ENCODE measurements at regions of chr22 and their contacts with region 1.

Region 1: DNA sequence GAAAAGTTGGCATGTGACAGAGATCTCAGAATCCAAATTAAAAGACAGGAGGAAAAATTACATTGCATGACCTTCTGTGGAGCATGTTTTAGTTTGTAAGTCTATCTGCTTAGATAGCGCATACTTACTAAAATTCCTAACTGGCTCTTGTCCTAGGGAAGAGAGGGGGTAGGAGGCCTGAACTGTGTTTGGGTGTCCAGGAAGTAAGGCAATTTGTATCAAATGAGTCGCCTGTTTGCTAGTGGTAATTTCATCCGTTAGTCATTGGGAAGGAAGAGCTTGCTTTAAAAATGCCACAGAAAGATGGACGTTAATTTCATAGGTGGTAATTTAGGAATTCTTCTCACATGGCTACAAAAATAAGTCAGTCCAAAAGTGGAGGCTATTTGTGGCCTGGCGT is 18.5 kb downstream of the GRK3 start:
- DNase-seq: no peak
- H3K4me3 ChIP-seq: no peak overlapping the region
- H3K27ac ChIP-seq: no peak overlapping the region
- H3K4me1 ChIP-seq: no peaks in the 10 kb centered on the region
- H3K27me3 ChIP-seq: no peaks in the 10 kb centered on the region
- CTCF ChIP-seq: no peak

Region 2: DNA sequence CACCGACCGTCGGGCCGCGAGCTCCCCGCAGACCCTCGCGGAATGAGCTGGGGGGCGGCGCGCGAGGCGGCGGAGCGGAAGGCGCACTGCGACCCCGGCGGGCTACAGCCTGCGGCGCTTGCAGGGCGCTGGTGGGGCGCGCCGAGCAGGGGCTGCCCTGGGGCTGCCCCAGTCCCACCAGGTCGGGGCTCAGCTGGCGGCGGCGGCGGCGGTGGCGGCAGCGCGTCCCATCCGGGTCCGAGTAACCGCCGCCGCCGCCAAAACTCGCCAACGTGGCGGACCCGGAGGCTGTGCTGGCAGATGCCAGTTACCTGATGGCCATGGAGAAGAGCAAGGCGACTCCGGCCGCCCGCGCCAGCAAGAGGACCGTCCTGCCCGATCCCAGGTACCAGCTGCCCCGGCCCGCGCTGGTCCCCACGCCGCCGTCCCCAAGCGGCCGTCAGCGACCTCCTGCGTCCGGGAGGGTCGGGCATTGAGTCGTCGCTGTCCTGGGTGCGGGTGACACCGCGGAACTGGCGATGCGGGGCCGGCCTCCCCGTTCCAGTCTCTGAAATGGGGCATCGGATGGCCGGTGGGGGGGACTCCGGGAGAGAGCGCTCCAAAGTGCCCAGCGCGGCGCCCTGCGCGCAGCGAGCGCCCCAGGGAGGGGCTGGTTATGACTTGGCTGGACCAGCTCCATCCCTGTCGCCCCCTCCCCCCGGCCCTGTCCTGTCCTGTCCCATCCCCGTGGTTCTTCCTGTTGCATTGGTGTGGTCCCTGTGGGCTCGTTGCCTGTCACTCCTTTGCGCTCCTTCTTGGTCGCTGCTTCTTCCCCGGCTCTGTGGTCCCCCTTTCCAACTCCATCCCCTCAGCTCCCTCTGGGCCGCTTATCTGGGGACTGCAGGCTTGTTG is 300.0 kb before region 1 on chr22:
- intact Hi-C with region 1: loop called (anchors 10 kb)
- DNase-seq: no peak
- H3K4me3 ChIP-seq: peak overlapping the region; percentile 16 to 21
- H3K27ac ChIP-seq: no peak overlapping the region
- H3K4me1 ChIP-seq: peaks cover 0 to 5% of the 10 kb centered on the region in 2 donors
- H3K27me3 ChIP-seq: no peaks in the 10 kb centered on the region
- CTCF ChIP-seq: no peak